ENCODE measurements at regions of chr18 and their contacts with region 1.

Region 1: GRCh38 chr18:58101291-58101794 is 57.3 kb downstream of the NEDD4L start:
- DNase-seq: no peak
- ATAC-seq: no peak
- H3K4me3 ChIP-seq: no peak overlapping the region
- H3K27ac ChIP-seq: no peak overlapping the region
- H3K4me1 ChIP-seq: peaks cover 0 to 3% of the 10 kb centered on the region in 2 experiments; a peak in 1 of 4 replicates
- H3K27me3 ChIP-seq: no peaks in the 10 kb centered on the region
- CTCF ChIP-seq: no peak
- POLR2A ChIP-seq: no peak
- RAD21 ChIP-seq: no peak

Region 2: DNA sequence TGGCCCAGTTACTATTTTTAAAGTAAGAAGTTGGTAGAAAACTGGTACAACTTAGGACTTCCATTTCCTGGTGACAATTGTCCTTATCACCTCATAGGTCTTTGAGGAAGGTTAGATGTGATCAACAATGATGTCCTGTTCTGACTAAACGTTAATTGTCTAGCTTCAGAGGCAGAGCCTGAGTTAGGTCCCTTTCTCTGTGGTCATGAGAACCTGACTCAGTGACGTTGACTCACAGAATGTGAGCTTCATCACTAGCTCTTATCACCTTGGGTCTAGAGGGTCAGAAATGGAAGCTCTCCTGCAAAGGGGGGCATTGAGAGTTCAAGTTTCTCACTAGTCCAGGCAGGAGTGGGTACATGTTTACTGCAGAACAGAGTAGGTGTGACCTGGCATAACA is 237.6 kb before region 1 on chr18:
- CTCF ChIA-PET with region 1: no interaction called
- POLR2A ChIA-PET with region 1: no interaction called
- RAD21 ChIA-PET with region 1: no interaction called
- intact Hi-C with region 1: no loop called
- DNase-seq: no peak
- ATAC-seq: no peak
- H3K4me3 ChIP-seq: no peak overlapping the region
- H3K27ac ChIP-seq: no peak overlapping the region
- H3K4me1 ChIP-seq: no peaks in the 10 kb centered on the region
- H3K27me3 ChIP-seq: no peaks in the 10 kb centered on the region
- CTCF ChIP-seq: no peak
- POLR2A ChIP-seq: no peak
- RAD21 ChIP-seq: no peak

Region 3: GRCh38 chr18:58057291-58057965 is 43.9 kb before region 1 on chr18:
- CTCF ChIA-PET with region 1: no interaction called
- POLR2A ChIA-PET with region 1: no interaction called
- RAD21 ChIA-PET with region 1: no interaction called
- intact Hi-C with region 1: loop called (anchors 5 kb)
- DNase-seq: no peak
- ATAC-seq: no peak
- H3K4me3 ChIP-seq: no peak overlapping the region
- H3K27ac ChIP-seq: no peak overlapping the region
- H3K4me1 ChIP-seq: peaks cover 8 to 9% of the 10 kb centered on the region in 2 experiments; a peak in 3 of 4 replicates
- H3K27me3 ChIP-seq: no peaks in the 10 kb centered on the region
- CTCF ChIP-seq: no peak
- POLR2A ChIP-seq: no peak
- RAD21 ChIP-seq: no peak

Measured in HCT116 (cell line).